H1 (cell line): ENCODE measurements at regions of chr2 and their contacts with region 1.

Region 1: DNA sequence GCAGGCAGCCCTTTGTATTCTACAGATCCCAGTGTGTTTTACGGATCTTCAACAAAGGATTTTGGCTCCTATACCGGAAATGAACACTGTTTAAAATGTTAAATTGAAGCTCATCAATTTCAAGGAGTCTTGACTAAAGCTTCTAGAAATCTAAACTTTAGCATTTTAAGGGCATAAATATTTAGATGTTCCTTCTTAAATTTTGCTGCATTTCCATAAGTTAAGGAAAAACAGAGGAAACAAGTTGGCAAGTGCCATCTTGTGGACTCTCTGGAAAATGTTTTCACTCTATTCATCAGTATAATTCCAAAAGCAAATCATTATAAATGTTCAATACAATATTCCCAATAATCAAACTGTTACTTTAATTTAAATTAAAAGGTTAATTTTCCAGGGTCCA is 19.6 kb downstream of the CHN1 start:
- DNase-seq: no peak
- H3K4me3 ChIP-seq: no peak overlapping the region
- H3K27ac ChIP-seq: no peak overlapping the region
- H3K4me1 ChIP-seq: no peaks in the 10 kb centered on the region; a peak in 2 of 7 replicates
- H3K27me3 ChIP-seq: no peaks in the 10 kb centered on the region
- CTCF ChIP-seq: peak in 2 of 3 experiments; percentile 37 to 40; a peak in 2 of 4 replicates
- EP300 ChIP-seq: no peak
- POLR2A ChIP-seq: no peak
- RAD21 ChIP-seq: peak; percentile 54 to 68

Region 2: GRCh38 chr2:174764280-174765255 is 221.1 kb before region 1 on chr2 and contains the start of gene CHRNA1:
- CTCF ChIA-PET with region 1: interaction called, 249 read pairs
- POLR2A ChIA-PET with region 1: no interaction called
- DNase-seq: no peak
- H3K4me3 ChIP-seq: no peak within 1 kb of the TSS
- H3K27ac ChIP-seq: no peak within 1 kb of the TSS
- H3K4me1 ChIP-seq: peaks cover 0 to 7% (median under 1%) of the 10 kb centered on the region in 4 experiments; a peak in 5 of 7 replicates
- H3K27me3 ChIP-seq: no peaks in the 10 kb centered on the region; a peak in 1 of 7 replicates
- CTCF ChIP-seq: no peak
- EP300 ChIP-seq: no peak
- POLR2A ChIP-seq: no peak
- RAD21 ChIP-seq: no peak
- total RNA-seq, gene CHRNA1: 0.15 TPM in 1 of 2 replicates, not detected in the other

Region 3: GRCh38 chr2:174971865-174972781 is 13.5 kb before region 1 on chr2:
- CTCF ChIA-PET with region 1: interaction called, 10 read pairs
- POLR2A ChIA-PET with region 1: no interaction called
- DNase-seq: no peak
- H3K4me3 ChIP-seq: no peak overlapping the region
- H3K27ac ChIP-seq: no peak overlapping the region
- H3K4me1 ChIP-seq: peaks cover 0 to 8% (median 3%) of the 10 kb centered on the region in 4 experiments; a peak in 2 of 7 replicates
- H3K27me3 ChIP-seq: no peaks in the 10 kb centered on the region
- CTCF ChIP-seq: no peak
- EP300 ChIP-seq: no peak
- POLR2A ChIP-seq: no peak
- RAD21 ChIP-seq: no peak